Activated CD4-positive, alpha-beta memory T cell treated with anti-CD3 and anti-CD28 coated beads for 36 hours (primary cell): ENCODE measurements at regions of chr11 and their contacts with region 1.

Region 1: DNA sequence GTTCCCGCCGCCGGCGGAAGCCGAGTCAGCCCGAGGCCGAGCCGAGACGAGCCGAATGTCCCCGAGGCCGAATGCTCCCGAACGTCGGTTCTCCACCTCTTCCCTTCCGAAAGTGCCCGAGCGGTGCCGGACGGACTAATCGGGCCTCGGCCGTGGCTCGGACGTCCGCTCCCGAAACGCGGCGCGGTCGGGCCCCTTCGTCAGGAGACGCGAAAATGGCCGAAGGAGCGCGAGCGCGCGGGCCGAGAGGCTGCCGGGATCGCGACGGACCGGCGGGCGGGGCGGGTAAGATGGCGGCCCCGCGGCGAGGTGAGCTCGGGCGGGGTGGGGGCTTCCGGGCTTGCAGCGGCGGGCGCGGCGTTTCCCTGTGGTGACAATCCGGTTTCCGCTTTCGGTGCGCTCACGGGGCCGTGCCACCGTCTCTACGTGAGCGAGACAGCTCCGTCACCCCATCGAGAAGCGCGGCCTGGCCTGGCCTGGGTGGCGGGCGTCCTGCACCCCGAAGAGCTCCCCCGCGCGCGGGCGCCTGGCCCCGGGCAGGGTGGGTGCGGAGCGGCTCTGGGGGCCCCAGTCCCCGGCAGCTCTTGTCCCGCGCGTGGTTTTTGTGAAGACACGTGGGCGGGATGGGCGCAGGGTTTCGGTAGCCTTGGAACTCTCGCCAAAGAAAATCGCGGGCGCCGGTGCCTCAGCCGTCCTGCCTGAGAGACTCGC is at the start of gene TMEM80:
- DNase-seq: peak; percentile 99
- H3K4me3 Mint-ChIP-seq: peak within 1 kb of the TSS; percentile 85
- H3K27ac Mint-ChIP-seq: peak within 1 kb of the TSS; percentile 93
- H3K4me1 Mint-ChIP-seq: peaks cover 49% of the 10 kb centered on the region
- H3K27me3 Mint-ChIP-seq: no peaks in the 10 kb centered on the region
- total RNA-seq, gene TMEM80: 9.5 to 9.8 TPM

Region 2: GRCh38 chr11:554824-555472 is 140.7 kb before region 1 on chr11:
- CTCF ChIA-PET with region 1: interaction called, 16 read pairs
- POLR2A ChIA-PET with region 1: no interaction called
- intact Hi-C with region 1: no loop called
- DNase-seq: peak; percentile 82
- H3K4me3 Mint-ChIP-seq: peak overlapping the region; percentile 16
- H3K27ac Mint-ChIP-seq: no peak overlapping the region
- H3K4me1 Mint-ChIP-seq: peaks cover 7% of the 10 kb centered on the region
- H3K27me3 Mint-ChIP-seq: peaks cover 5% of the 10 kb centered on the region

Region 3: DNA sequence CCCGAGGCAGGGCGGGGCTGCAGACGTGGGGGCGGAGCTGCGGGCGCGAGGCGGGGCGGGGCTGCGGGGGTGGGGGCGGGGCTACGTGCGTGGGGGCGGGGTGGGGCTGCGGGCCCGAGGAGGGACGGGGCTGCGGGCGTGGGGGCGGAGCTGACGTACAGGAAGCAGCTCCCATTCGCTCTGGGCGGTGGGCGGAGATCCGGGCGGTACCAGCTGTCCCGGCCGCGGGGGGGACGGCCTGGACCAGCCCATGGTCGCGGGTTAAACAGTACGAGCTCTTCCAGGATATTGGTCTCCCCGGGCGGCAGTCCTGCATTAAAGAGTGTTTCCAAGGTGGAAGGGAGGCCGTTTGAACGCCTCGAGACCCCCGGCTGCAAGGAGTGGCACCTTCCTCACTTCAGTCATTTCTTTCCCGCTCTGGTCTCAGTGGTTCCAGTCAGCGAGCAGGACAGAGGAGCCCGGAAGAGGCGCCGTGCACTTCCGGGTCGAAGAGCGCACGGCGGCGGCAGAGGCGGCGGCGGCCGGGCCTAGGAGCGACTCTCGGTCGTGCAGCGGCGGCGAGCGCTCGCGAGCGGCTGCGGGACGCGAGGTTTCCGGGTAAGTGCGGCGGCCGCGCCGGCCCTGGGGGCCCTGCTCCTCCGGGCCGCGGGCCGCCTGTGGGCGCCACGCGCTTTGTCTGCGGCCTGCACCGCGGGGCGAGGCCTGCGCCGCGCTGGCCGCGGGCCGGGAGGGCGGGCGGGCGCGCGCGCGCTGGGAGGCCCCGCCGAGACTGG is 119.5 kb before region 1 on chr11 and contains the start of gene PHRF1:
- CTCF ChIA-PET with region 1: interaction called, 5 read pairs
- POLR2A ChIA-PET with region 1: no interaction called
- intact Hi-C with region 1: loop called (anchors 1 kb)
- DNase-seq: peak; percentile 95
- H3K4me3 Mint-ChIP-seq: peak within 1 kb of the TSS; percentile 87
- H3K27ac Mint-ChIP-seq: peak within 1 kb of the TSS; percentile 98
- H3K4me1 Mint-ChIP-seq: peaks cover 45% of the 10 kb centered on the region
- H3K27me3 Mint-ChIP-seq: peaks cover 5% of the 10 kb centered on the region
- total RNA-seq, gene PHRF1: 32.4 to 33.5 TPM

Region 4: DNA sequence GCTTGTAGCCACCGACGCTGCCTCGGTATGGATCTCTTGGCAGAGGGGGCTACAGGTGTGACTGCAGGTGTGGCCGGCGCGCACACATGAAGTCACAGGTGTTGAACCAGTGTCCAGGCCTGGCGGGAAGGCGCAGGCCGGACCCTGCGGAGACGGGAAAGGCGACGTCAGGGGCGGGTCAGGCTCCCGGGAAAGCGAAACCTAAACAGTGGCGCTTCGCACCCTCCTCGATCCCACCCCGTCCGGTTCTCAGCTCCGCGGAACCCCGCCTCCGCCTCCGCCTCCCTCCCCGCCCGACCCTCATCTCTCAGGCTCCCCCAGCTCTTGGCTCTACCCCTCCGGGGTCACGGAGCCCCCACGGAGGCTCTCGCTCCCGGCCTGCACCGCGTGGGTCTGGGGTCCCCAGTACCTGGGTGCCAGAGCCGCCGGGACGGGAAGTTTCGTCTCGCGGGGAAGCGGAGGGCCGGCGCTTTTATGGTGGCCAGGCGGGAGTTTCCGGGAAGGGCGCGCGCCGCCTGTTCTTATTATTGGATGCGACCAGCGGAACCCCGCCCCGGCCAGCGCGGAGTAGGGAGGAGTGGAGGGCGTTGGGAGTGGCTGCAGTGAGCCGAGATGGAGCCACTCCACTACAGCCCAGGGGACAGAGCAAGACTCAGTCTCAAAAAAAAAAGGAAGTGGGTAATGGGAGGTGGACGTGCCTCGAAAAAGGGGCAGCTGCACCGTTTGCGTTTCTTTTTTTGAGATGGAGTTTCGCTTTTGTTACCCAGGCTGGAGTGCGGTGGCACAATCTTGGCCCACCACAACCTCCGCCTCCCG is 80.0 kb before region 1 on chr11 and contains the start of gene IRF7:
- CTCF ChIA-PET with region 1: no interaction called
- POLR2A ChIA-PET with region 1: no interaction called
- intact Hi-C with region 1: loop called (anchors 2 kb)
- DNase-seq: peak; percentile 94
- H3K4me3 Mint-ChIP-seq: peak within 1 kb of the TSS; percentile 92
- H3K27ac Mint-ChIP-seq: peak within 1 kb of the TSS; percentile 92
- H3K4me1 Mint-ChIP-seq: peaks cover 17% of the 10 kb centered on the region
- H3K27me3 Mint-ChIP-seq: no peaks in the 10 kb centered on the region
- total RNA-seq, gene IRF7: 79.9 to 80.7 TPM

Region 5: GRCh38 chr11:747158-748006 is 51.7 kb after region 1 on chr11 and contains the start of gene TALDO1:
- CTCF ChIA-PET with region 1: no interaction called
- POLR2A ChIA-PET with region 1: interaction called, 3 read pairs
- intact Hi-C with region 1: loop called (anchors 1 kb)
- DNase-seq: peak; percentile 92
- H3K4me3 Mint-ChIP-seq: peak within 1 kb of the TSS; percentile 81
- H3K27ac Mint-ChIP-seq: peak within 1 kb of the TSS; percentile 54
- H3K4me1 Mint-ChIP-seq: peaks cover 17% of the 10 kb centered on the region
- H3K27me3 Mint-ChIP-seq: no peaks in the 10 kb centered on the region
- total RNA-seq, gene TALDO1: 284 to 296 TPM

Region 6: DNA sequence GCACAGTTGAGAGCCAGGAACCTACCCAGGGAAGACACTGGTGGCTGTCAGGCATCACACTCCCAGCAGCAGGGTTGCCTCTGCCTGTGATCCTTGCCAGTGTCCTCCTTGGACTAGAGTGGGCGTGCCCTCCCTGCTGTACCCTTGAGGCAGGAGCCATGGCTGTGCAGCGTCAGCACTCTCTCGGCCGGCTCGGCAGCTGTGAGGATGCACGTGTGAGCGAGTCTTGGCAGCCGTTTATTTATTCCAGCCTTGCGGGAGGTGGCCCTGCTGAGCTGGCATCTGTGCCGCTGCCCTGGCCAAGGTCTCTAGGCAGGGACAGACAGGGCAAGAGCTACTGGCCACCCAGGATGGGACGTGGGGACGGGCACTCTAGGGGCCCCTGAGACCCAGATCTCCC is 180.8 kb after region 1 on chr11:
- CTCF ChIA-PET with region 1: no interaction called
- POLR2A ChIA-PET with region 1: no interaction called
- intact Hi-C with region 1: no loop called
- DNase-seq: no peak
- H3K4me3 Mint-ChIP-seq: no peak overlapping the region
- H3K27ac Mint-ChIP-seq: no peak overlapping the region
- H3K4me1 Mint-ChIP-seq: no peaks in the 10 kb centered on the region
- H3K27me3 Mint-ChIP-seq: no peaks in the 10 kb centered on the region